CD8-positive, alpha-beta memory T cell (primary cell): ENCODE measurements at regions of chr3 and their contacts with region 1.

Region 1: DNA sequence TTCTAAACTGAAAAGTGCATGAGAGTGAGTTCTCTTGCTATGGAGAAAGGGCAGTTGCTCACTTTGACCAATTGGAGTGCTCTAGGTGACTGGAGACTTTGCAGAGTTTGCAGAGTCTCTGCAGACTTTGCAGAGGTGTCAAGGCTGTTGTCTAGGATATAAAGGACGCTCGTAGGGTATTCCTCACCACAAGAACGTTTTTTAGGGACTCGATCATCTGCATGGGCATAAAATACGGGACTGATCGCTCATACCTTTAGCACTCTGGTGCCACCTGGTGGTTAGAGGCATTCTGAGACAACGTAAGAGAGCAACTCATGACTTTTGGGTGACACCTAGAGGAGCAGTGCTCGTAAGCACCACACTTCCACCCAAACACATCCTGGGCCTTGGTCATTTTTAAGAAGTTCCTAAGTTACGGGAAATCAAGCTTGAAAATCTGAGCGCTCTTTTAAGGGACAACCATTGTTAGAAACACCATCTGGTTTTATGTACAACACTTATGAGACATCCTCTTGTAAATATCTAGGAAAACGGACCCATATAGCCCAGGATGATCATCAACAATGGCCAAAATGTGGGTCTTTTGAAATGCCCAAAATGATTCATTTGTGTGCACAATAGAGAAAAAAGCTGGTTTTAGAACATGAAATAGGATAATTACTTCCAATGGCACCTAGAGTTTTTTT is 51.6 kb upstream of the XCR1 start:
- DNase-seq: peak; percentile 82 to 92 (median 85)
- H3K4me3 ChIP-seq: no peak overlapping the region
- H3K4me3 Mint-ChIP-seq: peak overlapping the region in 5 of 7 donors; percentile 1 to 71 (median 52)
- H3K27ac ChIP-seq: no peak overlapping the region
- H3K27ac Mint-ChIP-seq: peak overlapping the region in 7 of 8 donors; percentile 3 to 87 (median 44)
- H3K4me1 ChIP-seq: peaks cover 12% of the 10 kb centered on the region
- H3K4me1 Mint-ChIP-seq: peaks cover 22 to 43% (median 22%) of the 10 kb centered on the region in 3 donors
- H3K27me3 ChIP-seq: no peaks in the 10 kb centered on the region
- H3K27me3 Mint-ChIP-seq: no peaks in the 10 kb centered on the region

Region 2: DNA sequence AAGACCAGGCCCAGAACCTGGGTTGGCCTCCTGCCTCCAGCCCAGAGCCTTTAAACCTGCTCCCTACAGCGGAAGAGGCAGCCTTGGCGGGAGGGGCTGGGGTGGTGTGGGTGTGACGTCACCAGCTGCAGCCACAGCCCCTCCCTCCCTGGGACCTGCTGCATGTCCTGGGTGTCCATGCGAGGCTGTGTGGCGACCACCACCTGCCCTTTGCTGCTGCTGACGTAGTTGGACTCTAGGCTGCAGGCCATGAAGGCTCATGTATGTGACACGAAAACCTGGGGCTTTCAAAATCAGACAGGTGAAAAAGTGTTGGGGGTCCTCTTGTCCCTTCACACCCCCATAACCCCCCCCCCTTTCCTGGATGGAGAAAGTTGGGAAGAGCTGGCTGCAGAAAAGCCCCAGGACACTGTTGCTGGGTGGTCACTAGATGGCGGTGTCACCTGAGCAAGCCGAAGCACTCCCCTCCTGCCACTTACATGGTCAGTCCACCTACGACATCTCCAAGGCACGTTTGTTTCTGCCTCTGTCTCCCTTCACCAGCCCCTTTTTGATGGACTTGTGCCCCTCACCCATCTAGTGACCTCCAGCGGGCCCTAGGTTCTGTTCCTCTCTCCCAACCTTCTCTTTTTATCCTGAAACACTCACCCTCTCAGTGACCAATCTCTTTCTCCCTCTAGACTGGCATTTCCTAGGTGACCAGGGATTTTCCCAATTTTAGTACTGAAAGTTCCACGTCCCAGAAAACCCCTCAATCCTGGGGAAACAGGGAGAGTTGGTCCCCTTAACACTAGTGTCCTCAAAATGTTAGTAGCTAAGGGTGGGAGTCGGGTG is 317.8 kb before region 1 on chr3:
- CTCF ChIA-PET with region 1: interaction called, 31 read pairs
- POLR2A ChIA-PET with region 1: no interaction called
- DNase-seq: peak; percentile 20 to 62 (median 27)
- H3K4me3 ChIP-seq: no peak overlapping the region
- H3K4me3 Mint-ChIP-seq: no peak overlapping the region
- H3K27ac ChIP-seq: no peak overlapping the region
- H3K27ac Mint-ChIP-seq: peak overlapping the region in 1 of 8 donors; percentile 17
- H3K4me1 ChIP-seq: no peaks in the 10 kb centered on the region
- H3K4me1 Mint-ChIP-seq: peaks cover 2 to 5% (median 4%) of the 10 kb centered on the region in 3 donors
- H3K27me3 ChIP-seq: no peaks in the 10 kb centered on the region
- H3K27me3 Mint-ChIP-seq: peaks cover 4 to 6% of the 10 kb centered on the region in 2 donors

Region 3: DNA sequence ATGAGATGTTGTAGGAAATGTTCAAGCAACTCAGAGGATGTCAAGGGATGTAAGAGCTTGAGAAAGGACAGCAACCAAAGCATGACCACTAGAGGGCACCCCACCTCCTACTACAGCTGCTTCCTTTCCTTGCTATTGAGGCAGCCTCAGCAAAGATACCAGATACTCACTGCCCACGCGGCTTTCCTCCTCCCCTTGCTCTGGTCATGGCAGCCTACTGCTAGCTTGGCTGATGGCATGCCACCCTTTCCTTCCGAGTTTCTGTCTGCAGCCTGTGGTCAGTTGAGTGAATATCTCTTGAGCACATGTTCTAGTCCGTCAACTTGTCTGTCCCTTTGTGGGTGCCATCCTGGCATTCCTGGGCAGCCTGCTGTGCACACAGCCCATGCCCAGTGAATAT is 140.0 kb before region 1 on chr3:
- CTCF ChIA-PET with region 1: interaction called, 295 read pairs
- POLR2A ChIA-PET with region 1: interaction called, 7 read pairs
- DNase-seq: peak; percentile 74 to 87 (median 76)
- H3K4me3 ChIP-seq: no peak overlapping the region
- H3K4me3 Mint-ChIP-seq: peak overlapping the region in 1 of 7 donors; percentile 42
- H3K27ac ChIP-seq: no peak overlapping the region
- H3K27ac Mint-ChIP-seq: peak overlapping the region in 5 of 8 donors; percentile 13 to 79 (median 62)
- H3K4me1 ChIP-seq: peaks cover 30% of the 10 kb centered on the region
- H3K4me1 Mint-ChIP-seq: peaks cover 47 to 64% (median 55%) of the 10 kb centered on the region in 3 donors
- H3K27me3 ChIP-seq: no peaks in the 10 kb centered on the region
- H3K27me3 Mint-ChIP-seq: no peaks in the 10 kb centered on the region

Region 4: GRCh38 chr3:45958321-45958791 is 120.5 kb before region 1 on chr3:
- CTCF ChIA-PET with region 1: interaction called, 11 read pairs
- POLR2A ChIA-PET with region 1: no interaction called
- DNase-seq: peak in 1 of 5 donors; percentile 51
- H3K4me3 ChIP-seq: no peak overlapping the region
- H3K4me3 Mint-ChIP-seq: peak overlapping the region; percentile 3 to 84 (median 56)
- H3K27ac ChIP-seq: no peak overlapping the region
- H3K27ac Mint-ChIP-seq: peak overlapping the region; percentile 81 to 95 (median 92)
- H3K4me1 ChIP-seq: peaks cover 36% of the 10 kb centered on the region
- H3K4me1 Mint-ChIP-seq: peaks cover 76 to 90% (median 78%) of the 10 kb centered on the region in 3 donors
- H3K27me3 ChIP-seq: no peaks in the 10 kb centered on the region
- H3K27me3 Mint-ChIP-seq: no peaks in the 10 kb centered on the region

Region 5: GRCh38 chr3:45995236-45996192 is 83.3 kb before region 1 on chr3 and contains the start of gene FYCO1:
- CTCF ChIA-PET with region 1: interaction called, 26 read pairs
- POLR2A ChIA-PET with region 1: no interaction called
- DNase-seq: peak; percentile 82 to 90 (median 83)
- H3K4me3 ChIP-seq: peak within 1 kb of the TSS; percentile 91
- H3K4me3 Mint-ChIP-seq: peak within 1 kb of the TSS; percentile 88 to 96 (median 92)
- H3K27ac ChIP-seq: peak within 1 kb of the TSS; percentile 87
- H3K27ac Mint-ChIP-seq: peak within 1 kb of the TSS; percentile 88 to 99 (median 94)
- H3K4me1 ChIP-seq: peaks cover 42% of the 10 kb centered on the region
- H3K4me1 Mint-ChIP-seq: peaks cover 49 to 58% (median 51%) of the 10 kb centered on the region in 3 donors
- H3K27me3 ChIP-seq: no peaks in the 10 kb centered on the region
- H3K27me3 Mint-ChIP-seq: peaks cover 0 to 2% of the 10 kb centered on the region in 2 donors
- total RNA-seq, gene FYCO1: 13.4 to 13.7 TPM

Region 6: GRCh38 chr3:46065294-46065721 is 13.5 kb before region 1 on chr3:
- CTCF ChIA-PET with region 1: interaction called, 61 read pairs
- POLR2A ChIA-PET with region 1: interaction called, 3 read pairs
- DNase-seq: peak; percentile 62 to 94 (median 84)
- H3K4me3 ChIP-seq: peak overlapping the region; percentile 13
- H3K4me3 Mint-ChIP-seq: peak overlapping the region; percentile 36 to 84 (median 76)
- H3K27ac ChIP-seq: no peak overlapping the region
- H3K27ac Mint-ChIP-seq: peak overlapping the region; percentile 77 to 97 (median 96)
- H3K4me1 ChIP-seq: peaks cover 66% of the 10 kb centered on the region
- H3K4me1 Mint-ChIP-seq: peaks cover 72 to 79% (median 79%) of the 10 kb centered on the region in 3 donors
- H3K27me3 ChIP-seq: no peaks in the 10 kb centered on the region
- H3K27me3 Mint-ChIP-seq: no peaks in the 10 kb centered on the region

Region 7: GRCh38 chr3:46695177-46695961 is 616.5 kb after region 1 on chr3:
- CTCF ChIA-PET with region 1: no interaction called
- POLR2A ChIA-PET with region 1: no interaction called
- DNase-seq: peak in 2 of 5 donors; percentile 23 to 43
- H3K4me3 ChIP-seq: peak overlapping the region; percentile 3
- H3K4me3 Mint-ChIP-seq: peak overlapping the region; percentile 51 to 73 (median 61)
- H3K27ac ChIP-seq: no peak overlapping the region
- H3K27ac Mint-ChIP-seq: peak overlapping the region in 7 of 8 donors; percentile 35 to 86 (median 72)
- H3K4me1 ChIP-seq: peaks cover 53% of the 10 kb centered on the region
- H3K4me1 Mint-ChIP-seq: peaks cover 29 to 58% (median 34%) of the 10 kb centered on the region in 3 donors
- H3K27me3 ChIP-seq: no peaks in the 10 kb centered on the region
- H3K27me3 Mint-ChIP-seq: peaks cover 0 to 2% of the 10 kb centered on the region in 2 donors